Ovary (tissue), 10 donors: ENCODE measurements at regions of chr5 and their contacts with region 1.

Region 1: GRCh38 chr5:6632917-6633468 is at the starts of genes NSUN2 and SRD5A1:
- DNase-seq: peak; percentile 89 to 94 (median 91)
- H3K4me3 ChIP-seq: peak within 1 kb of the TSS; percentile 87
- H3K27ac ChIP-seq: peak within 1 kb of the TSS; percentile 93
- H3K4me1 ChIP-seq: peaks cover 1% of the 10 kb centered on the region
- H3K27me3 ChIP-seq: no peaks in the 10 kb centered on the region
- CTCF ChIP-seq: no peak
- EP300 ChIP-seq: no peak
- POLR2A ChIP-seq: peak; percentile 39
- total RNA-seq, gene NSUN2: 34.7 to 52.1 (median 40.7) TPM
- total RNA-seq, gene SRD5A1: 4.4 to 13.5 (median 9.8) TPM

Region 2: DNA sequence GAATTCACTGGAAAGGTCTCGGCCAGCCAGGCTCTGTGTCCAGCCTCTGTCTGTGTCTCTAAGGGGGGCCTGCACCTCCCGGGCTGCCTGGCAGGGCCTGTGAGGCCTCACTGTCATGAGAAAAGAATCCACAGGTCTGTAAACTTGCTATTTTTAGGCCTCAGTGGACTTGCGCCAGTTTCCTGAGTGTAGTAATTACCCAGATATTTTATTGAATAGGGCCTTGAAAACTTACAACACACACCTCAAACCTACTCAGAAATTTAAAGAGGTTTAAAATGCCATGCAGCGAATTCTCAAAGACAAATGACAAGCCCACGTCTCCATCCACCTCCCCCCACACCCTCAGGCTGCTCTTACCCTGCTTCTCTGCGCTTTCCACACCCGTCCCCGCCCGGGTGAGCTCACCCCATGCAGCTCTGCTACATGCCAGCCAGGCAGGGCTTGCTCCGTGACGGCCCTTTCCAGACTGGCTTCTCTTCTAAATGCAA is 71.4 kb after region 1 on chr5:
- intact Hi-C with region 1: loop called in 1 of 4 experiments (anchors 10 kb)
- DNase-seq: peak; percentile 69 to 86 (median 77)
- H3K4me3 ChIP-seq: no peak overlapping the region
- H3K27ac ChIP-seq: peak overlapping the region; percentile 53 to 64
- H3K4me1 ChIP-seq: peaks cover 6% of the 10 kb centered on the region
- H3K27me3 ChIP-seq: no peaks in the 10 kb centered on the region
- CTCF ChIP-seq: no peak
- EP300 ChIP-seq: no peak
- POLR2A ChIP-seq: no peak

Region 3: DNA sequence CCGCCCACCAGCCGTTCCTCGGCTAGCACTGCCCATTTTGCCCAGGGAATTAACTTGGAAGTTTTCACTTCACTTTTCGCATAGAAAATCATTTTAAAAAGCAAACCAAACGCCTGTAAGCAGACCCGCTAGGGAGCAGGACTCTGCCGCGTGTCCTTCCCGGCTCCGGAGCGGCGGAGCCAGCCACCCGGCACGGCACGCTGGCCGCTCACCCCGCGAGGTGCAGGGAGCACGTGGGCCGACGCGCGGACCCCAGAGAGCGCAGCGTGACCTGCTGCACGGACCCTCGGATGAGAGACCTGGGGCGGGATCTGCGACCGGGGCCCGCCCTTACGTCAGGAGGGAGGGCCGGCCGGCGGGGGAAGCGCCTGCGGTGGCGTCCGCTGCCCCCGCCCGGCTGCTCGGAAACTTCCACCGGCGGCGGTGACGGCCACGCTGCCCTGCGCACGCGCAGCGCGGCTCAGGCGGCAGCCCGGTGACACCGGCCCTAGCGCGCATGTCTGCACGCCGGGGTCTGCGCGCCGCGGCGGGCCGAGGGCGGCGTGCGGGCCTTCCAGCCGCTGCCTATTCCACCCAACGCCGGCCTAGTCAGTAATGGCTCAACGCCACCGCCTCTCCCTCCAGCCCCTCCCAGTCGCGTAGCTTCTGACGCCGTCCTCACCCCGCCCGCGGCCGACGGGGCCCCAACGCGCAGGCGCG is 79.7 kb after region 1 on chr5:
- intact Hi-C with region 1: loop called in 2 of 4 experiments (anchors 5 to 10 kb)
- DNase-seq: peak; percentile 97 to 98 (median 98)
- H3K4me3 ChIP-seq: peak overlapping the region; percentile 72
- H3K27ac ChIP-seq: peak overlapping the region; percentile 85 to 86
- H3K4me1 ChIP-seq: peaks cover 20% of the 10 kb centered on the region
- H3K27me3 ChIP-seq: no peaks in the 10 kb centered on the region
- CTCF ChIP-seq: peak in 1 of 3 donors; percentile 27
- EP300 ChIP-seq: no peak
- POLR2A ChIP-seq: peak; percentile 57

Region 4: DNA sequence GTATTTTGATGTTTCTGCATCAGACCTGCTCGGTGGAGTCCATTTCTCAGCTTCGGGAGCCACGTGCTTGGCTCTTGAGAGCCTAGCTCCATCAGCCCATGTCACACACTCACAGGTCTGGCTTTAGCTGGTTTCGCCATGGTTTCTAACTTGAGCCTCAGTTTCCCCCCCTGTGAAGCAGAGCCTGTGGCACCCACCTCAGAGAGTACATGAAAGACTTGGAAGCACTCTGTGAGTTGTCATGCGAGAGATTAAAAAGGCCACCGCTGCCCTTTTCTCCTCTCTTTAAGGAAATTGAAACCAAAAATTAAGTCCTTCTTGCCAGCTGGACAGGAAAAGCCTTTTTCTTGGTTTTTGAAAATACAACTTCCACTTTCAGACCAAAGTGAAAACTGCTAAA is 89.0 kb after region 1 on chr5:
- intact Hi-C with region 1: loop called in 1 of 4 experiments (anchors 5 kb)
- DNase-seq: peak in 2 of 5 donors; percentile 13 to 19
- H3K4me3 ChIP-seq: no peak overlapping the region
- H3K27ac ChIP-seq: peak overlapping the region in 1 of 2 donors; percentile 27
- H3K4me1 ChIP-seq: peaks cover 39% of the 10 kb centered on the region
- H3K27me3 ChIP-seq: no peaks in the 10 kb centered on the region
- CTCF ChIP-seq: no peak
- EP300 ChIP-seq: no peak
- POLR2A ChIP-seq: no peak

Region 5: GRCh38 chr5:6732634-6733410 is 99.8 kb after region 1 on chr5:
- intact Hi-C with region 1: loop called in 1 of 4 experiments (anchors 10 kb)
- DNase-seq: peak in 2 of 5 donors; percentile 44 to 52
- H3K4me3 ChIP-seq: no peak overlapping the region
- H3K27ac ChIP-seq: no peak overlapping the region
- H3K4me1 ChIP-seq: peaks cover 22% of the 10 kb centered on the region
- H3K27me3 ChIP-seq: no peaks in the 10 kb centered on the region
- CTCF ChIP-seq: no peak
- EP300 ChIP-seq: no peak
- POLR2A ChIP-seq: no peak

Region 6: DNA sequence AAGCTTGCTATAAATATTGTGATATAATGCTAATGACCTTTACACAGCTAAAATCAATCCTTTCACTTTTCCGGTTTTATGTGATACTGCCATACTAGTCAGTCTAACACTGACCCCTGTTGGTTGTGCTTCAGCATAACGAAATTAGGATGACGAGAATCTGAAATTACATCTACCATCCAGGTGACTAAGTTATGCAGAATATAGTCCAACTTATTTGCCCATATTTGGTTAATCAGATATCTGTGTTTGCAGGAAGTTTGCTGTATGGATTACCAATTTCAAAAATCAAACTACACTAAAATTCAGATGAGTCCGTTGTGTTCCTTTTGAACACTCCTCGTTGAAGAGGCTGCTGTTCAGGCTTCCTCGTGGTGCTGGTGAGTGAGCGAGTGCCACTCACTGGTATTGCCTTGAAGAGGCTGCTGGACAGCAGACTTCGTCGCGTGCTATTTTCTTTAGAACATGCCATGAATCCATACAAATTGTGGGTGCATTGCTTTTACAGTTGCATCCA is 112.8 kb after region 1 on chr5:
- intact Hi-C with region 1: loop called in 1 of 4 experiments (anchors 10 kb)
- DNase-seq: peak in 1 of 5 donors; percentile 16
- H3K4me3 ChIP-seq: no peak overlapping the region
- H3K27ac ChIP-seq: no peak overlapping the region
- H3K4me1 ChIP-seq: peaks cover 4% of the 10 kb centered on the region
- H3K27me3 ChIP-seq: no peaks in the 10 kb centered on the region
- CTCF ChIP-seq: peak; percentile 44 to 60 (median 49)
- EP300 ChIP-seq: no peak
- POLR2A ChIP-seq: no peak